ENCODE measurements at regions of chr4 and their contacts with region 1.

Region 1: DNA sequence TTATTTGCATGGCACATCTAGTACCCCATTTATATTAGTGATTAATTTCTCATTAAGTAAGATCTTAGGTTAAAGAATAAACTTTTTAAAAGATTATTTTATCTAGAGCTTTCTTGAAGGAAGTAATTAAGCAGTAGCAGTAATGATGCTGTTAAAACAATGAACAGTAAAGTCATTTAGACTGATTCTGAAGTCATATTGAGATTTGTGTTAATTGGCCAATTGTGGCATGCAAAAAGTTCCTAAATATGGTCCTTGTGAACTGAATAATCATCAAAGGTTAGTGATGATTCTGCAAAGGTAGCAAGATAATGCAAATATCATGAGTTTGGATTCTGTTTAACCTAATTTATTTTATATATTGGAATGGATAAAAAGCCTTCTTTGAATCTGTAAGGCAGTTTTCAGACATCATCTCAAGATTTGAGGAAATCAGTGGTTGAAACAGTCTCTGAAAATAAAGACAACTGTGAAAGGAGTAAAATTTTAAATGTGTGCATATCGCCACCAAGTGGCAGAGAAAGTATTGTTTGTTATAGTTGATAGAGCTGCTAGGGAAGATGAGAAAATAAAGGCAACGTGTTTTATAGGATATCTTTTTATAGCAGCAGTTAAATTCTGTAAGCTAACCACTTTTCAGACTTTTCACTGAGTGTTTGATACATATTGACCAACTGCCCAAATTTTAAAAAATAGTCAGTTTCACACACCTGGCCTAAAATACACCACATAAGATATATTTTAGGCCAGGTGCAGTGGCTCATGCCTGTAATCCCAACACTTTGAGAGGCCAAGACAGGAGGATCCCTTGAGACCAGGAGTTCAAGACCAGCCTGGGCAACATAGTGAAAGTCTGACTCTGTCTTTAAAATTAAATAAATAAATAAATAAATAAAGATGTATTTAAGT is 79.6 kb downstream of the CCKAR start:
- DNase-seq: peak; percentile 20
- H3K4me3 Mint-ChIP-seq: no peak overlapping the region
- H3K27ac Mint-ChIP-seq: no peak overlapping the region
- H3K4me1 Mint-ChIP-seq: no peaks in the 10 kb centered on the region
- H3K27me3 Mint-ChIP-seq: no peaks in the 10 kb centered on the region
- CTCF ChIP-seq: peak; percentile 46

Region 2: DNA sequence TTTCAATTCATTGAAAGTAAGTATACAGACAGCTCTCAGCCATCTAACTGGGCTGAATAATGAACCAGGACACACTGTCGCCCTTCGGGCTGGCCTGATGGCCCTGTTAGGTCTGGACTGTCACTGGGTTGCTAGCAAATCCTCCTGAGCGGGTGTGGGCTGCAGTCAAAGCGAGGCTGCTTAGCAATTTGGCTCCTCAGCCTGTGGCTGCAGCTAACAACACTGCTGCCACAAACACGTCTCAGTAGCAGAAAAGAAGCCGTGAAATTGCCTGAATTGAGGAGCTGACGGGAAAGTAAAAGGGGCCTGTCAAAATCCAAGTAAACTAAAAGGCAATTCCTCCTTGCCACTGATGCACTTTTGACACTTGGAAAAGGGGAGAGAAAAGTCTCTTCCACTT is 423.8 kb before region 1 on chr4:
- CTCF ChIA-PET with region 1: interaction called, 3 read pairs
- intact Hi-C with region 1: loop called (anchors 5 kb)
- DNase-seq: no peak
- H3K4me3 Mint-ChIP-seq: no peak overlapping the region
- H3K27ac Mint-ChIP-seq: no peak overlapping the region
- H3K4me1 Mint-ChIP-seq: no peaks in the 10 kb centered on the region
- H3K27me3 Mint-ChIP-seq: no peaks in the 10 kb centered on the region
- CTCF ChIP-seq: no peak

Region 3: DNA sequence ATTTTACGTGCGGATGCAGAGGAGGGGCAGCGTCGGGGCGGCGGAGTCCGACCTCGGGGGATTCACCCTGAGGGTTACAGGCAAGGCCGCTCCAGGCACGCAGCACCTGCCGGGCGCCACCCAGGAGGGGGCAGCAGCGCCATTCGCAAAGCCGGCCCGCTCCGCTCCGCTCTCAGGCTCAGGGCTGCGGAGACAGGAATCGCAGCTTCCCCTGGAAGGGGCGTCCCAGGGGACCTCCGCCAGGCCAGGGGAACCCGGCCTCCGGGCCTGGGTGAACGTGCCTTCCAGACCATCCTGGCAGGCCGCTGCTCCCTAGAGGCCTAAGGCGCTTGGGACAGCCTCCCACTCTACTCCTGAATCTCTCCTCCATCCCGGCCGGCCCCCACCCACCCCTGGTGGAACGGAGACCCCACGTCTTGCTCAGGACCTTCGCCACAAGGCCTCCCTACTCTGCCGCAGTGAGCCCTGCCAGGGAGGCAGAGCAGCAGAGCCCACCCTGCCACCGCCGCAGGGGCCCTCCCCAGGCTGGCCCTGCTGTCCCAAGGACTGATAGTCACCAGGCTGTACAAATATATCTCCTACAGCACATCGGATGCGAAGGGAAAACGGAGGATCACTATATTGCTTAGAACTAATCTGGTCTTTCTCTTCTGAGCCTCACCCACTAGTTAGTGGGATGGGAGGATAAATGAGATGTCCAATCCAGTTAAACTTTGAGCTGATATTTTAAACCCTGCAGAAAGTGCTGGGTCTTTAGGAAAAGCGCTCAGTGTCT is 381.7 kb before region 1 on chr4:
- CTCF ChIA-PET with region 1: interaction called, 3 read pairs
- intact Hi-C with region 1: loop called (anchors 1 kb)
- DNase-seq: peak; percentile 78
- H3K4me3 Mint-ChIP-seq: peak overlapping the region; percentile 65
- H3K27ac Mint-ChIP-seq: no peak overlapping the region
- H3K4me1 Mint-ChIP-seq: no peaks in the 10 kb centered on the region
- H3K27me3 Mint-ChIP-seq: peaks cover 26% of the 10 kb centered on the region
- CTCF ChIP-seq: peak; percentile 56

Region 4: GRCh38 chr4:26081795-26082498 is 328.7 kb before region 1 on chr4:
- CTCF ChIA-PET with region 1: no interaction called
- intact Hi-C with region 1: loop called (anchors 5 kb)
- DNase-seq: peak; percentile 21
- H3K4me3 Mint-ChIP-seq: no peak overlapping the region
- H3K27ac Mint-ChIP-seq: no peak overlapping the region
- H3K4me1 Mint-ChIP-seq: peaks cover 25% of the 10 kb centered on the region
- H3K27me3 Mint-ChIP-seq: peaks cover 12% of the 10 kb centered on the region
- CTCF ChIP-seq: peak; percentile 17

Region 5: DNA sequence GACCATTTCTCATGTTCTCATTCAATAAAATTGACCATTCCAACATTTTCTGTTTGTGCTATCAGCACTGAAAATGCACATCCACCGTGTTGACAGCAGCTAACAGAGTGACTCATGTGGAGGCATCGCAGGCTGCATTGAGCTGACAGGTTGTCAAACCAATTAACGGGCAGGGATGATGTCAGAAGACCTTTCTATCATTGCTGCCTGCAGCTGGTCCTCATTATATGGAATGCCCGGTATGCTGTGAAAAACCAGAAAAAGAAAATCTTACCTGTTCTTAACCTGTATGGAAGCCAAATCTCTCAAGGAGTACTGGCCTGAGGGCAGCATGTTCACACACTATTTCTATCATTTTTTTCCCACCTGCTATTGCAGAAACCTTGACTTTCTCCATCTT is 294.5 kb before region 1 on chr4:
- CTCF ChIA-PET with region 1: no interaction called
- intact Hi-C with region 1: no loop called
- DNase-seq: no peak
- H3K4me3 Mint-ChIP-seq: no peak overlapping the region
- H3K27ac Mint-ChIP-seq: no peak overlapping the region
- H3K4me1 Mint-ChIP-seq: peaks cover 17% of the 10 kb centered on the region
- H3K27me3 Mint-ChIP-seq: no peaks in the 10 kb centered on the region
- CTCF ChIP-seq: no peak

Region 6: DNA sequence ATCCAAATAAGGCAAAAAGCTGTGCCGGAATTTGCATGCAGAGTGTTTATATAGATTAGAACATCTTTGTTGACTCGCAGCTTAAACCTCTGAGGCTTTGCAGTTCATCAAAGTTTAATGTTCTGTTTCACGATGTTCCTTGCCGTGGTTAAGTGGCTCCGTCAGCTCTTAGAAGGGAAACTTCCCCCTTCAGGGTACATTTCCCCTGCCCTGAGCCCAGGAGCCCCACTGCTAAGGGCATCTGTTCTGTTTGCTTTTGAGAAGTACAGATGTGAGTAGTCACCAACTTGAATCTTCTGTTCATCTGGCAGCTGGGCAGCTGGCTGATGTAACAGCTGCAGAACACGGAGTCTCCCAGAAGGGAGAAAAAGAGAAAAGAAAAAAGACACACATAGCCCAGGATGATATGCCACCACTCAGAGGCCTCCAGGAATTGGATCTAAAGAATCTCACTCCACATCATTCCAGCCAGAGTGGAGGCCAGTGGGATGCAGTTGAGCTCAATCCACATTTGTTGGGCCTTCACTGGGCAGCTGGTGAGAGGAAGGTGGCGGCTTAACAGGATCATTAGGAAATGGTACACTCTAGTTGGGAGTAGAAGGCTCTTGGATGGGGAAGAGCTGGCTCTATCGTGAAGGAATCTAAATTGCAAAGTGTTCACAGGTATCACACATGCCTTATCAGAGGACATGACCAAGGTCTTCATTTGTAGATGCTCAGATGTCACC is 268.6 kb before region 1 on chr4:
- CTCF ChIA-PET with region 1: no interaction called
- intact Hi-C with region 1: no loop called
- DNase-seq: no peak
- H3K4me3 Mint-ChIP-seq: no peak overlapping the region
- H3K27ac Mint-ChIP-seq: no peak overlapping the region
- H3K4me1 Mint-ChIP-seq: peaks cover 10% of the 10 kb centered on the region
- H3K27me3 Mint-ChIP-seq: no peaks in the 10 kb centered on the region
- CTCF ChIP-seq: no peak

Region 7: GRCh38 chr4:26330186-26330787 is 80.4 kb before region 1 on chr4:
- CTCF ChIA-PET with region 1: interaction called, 14 read pairs
- intact Hi-C with region 1: loop called (anchors 2 kb)
- DNase-seq: peak; percentile 15
- H3K4me3 Mint-ChIP-seq: no peak overlapping the region
- H3K27ac Mint-ChIP-seq: no peak overlapping the region
- H3K4me1 Mint-ChIP-seq: peaks cover 19% of the 10 kb centered on the region
- H3K27me3 Mint-ChIP-seq: no peaks in the 10 kb centered on the region
- CTCF ChIP-seq: no peak

Measured in Calu3 (cell line).